ENCODE measurements at regions of chr9 and their contacts with region 1.

Region 1: DNA sequence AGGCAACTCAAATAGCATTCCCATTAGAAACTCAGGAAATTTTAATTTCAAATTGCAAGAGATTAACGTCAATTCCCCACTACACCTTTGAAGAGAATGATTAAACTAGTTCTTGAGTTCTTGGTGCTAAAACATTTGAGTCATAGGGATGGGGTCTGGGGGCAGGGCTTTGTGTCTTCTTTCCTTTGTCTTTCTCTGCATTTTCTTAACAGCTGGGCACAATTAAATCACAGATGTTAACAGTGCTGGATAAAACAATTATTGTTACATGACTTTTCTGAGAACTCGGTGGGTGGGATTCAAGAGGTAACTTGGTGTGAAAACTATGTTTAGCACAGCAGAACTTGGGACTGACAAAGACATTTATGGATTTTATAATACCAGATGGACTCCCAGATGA is 351.9 kb upstream of the TNC start:
- DNase-seq: no peak
- H3K4me3 ChIP-seq: no peak overlapping the region
- H3K4me3 Mint-ChIP-seq: no peak overlapping the region
- H3K27ac Mint-ChIP-seq: no peak overlapping the region
- H3K4me1 ChIP-seq: no peaks in the 10 kb centered on the region
- H3K4me1 Mint-ChIP-seq: no peaks in the 10 kb centered on the region
- H3K27me3 ChIP-seq: no peaks in the 10 kb centered on the region
- H3K27me3 Mint-ChIP-seq: peaks cover 10% of the 10 kb centered on the region
- CTCF ChIP-seq: no peak

Region 2: DNA sequence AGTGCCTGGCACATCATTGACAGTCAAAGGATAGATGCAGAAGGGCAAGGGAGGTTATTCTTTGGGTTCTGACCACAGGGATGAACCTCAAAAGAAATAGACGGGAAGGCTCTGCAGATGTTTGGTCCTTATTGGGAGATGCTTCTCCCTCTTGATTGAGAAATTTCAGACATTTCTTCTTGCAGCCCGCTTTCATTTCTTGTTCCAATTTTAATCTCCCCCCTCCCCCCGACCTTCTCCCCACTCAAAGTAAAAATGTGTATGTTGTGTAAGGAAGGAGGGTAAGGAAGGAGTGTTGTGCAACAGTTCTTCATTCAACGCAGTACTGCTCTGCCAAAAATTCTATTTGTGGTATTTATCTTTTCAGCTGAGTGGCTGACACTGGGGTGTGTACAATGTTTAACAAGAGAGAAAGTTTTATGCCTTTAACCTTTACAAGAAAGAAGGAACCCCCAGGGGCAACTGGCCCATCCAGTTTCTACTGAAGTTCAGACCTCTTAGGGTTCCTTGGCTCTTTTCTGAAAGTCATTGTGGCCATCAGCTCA is 617.7 kb before region 1 on chr9:
- CTCF ChIA-PET with region 1: no interaction called
- POLR2A ChIA-PET with region 1: no interaction called
- intact Hi-C with region 1: no loop called
- DNase-seq: peak; percentile 5 to 43
- H3K4me3 ChIP-seq: no peak overlapping the region
- H3K4me3 Mint-ChIP-seq: no peak overlapping the region
- H3K27ac Mint-ChIP-seq: no peak overlapping the region
- H3K4me1 ChIP-seq: peaks cover 26% of the 10 kb centered on the region
- H3K4me1 Mint-ChIP-seq: peaks cover 24% of the 10 kb centered on the region
- H3K27me3 ChIP-seq: no peaks in the 10 kb centered on the region
- H3K27me3 Mint-ChIP-seq: no peaks in the 10 kb centered on the region
- CTCF ChIP-seq: no peak

Region 3: DNA sequence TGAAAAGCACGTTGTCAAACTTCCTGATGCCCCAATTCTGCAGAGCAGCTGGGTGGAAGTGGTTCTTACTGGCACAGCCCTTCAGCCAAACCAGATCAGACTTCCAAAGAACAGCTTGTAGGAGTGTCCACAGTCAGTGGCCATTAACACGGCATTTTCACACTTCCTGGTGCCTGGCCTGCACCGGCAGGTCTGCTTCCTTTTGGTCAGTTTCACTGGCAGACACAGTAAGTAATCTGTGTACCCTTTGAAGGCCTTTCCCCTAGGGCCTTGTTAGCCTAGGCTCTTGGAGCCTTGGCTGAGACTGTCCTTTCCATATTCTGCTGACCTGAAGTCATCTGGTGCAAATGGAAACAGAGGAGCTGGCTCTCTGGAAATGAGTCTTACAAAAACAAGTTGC is 54.4 kb before region 1 on chr9:
- CTCF ChIA-PET with region 1: no interaction called
- POLR2A ChIA-PET with region 1: no interaction called
- intact Hi-C with region 1: loop called (anchors 2 kb)
- DNase-seq: no peak
- H3K4me3 ChIP-seq: no peak overlapping the region
- H3K4me3 Mint-ChIP-seq: no peak overlapping the region
- H3K27ac Mint-ChIP-seq: no peak overlapping the region
- H3K4me1 ChIP-seq: no peaks in the 10 kb centered on the region
- H3K4me1 Mint-ChIP-seq: no peaks in the 10 kb centered on the region
- H3K27me3 ChIP-seq: no peaks in the 10 kb centered on the region
- H3K27me3 Mint-ChIP-seq: no peaks in the 10 kb centered on the region
- CTCF ChIP-seq: no peak

Region 4: GRCh38 chr9:115524453-115525059 is 54.7 kb after region 1 on chr9:
- CTCF ChIA-PET with region 1: no interaction called
- POLR2A ChIA-PET with region 1: no interaction called
- intact Hi-C with region 1: no loop called
- DNase-seq: peak in 1 of 2 experiments; percentile 64
- H3K4me3 ChIP-seq: no peak overlapping the region
- H3K4me3 Mint-ChIP-seq: no peak overlapping the region
- H3K27ac Mint-ChIP-seq: no peak overlapping the region
- H3K4me1 ChIP-seq: no peaks in the 10 kb centered on the region; the same call in 1 of the 2 replicates
- H3K4me1 Mint-ChIP-seq: no peaks in the 10 kb centered on the region
- H3K27me3 ChIP-seq: no peaks in the 10 kb centered on the region
- H3K27me3 Mint-ChIP-seq: peaks cover 6% of the 10 kb centered on the region
- CTCF ChIP-seq: peak; percentile 62 to 68